AG04449 (cell line): ENCODE measurements at regions of chr11 and their contacts with region 1.

Region 1: GRCh38 chr11:25981998-25982397 is 349.9 kb upstream of the ANO3 start:
- DNase-seq: peak; percentile 12
- H3K4me3 ChIP-seq: no peak overlapping the region
- CTCF ChIP-seq: peak; percentile 45

Region 2: GRCh38 chr11:25958045-25958444 is 24.0 kb before region 1 on chr11:
- CTCF ChIA-PET with region 1: interaction called, 14 read pairs
- POLR2A ChIA-PET with region 1: no interaction called
- DNase-seq: no peak
- H3K4me3 ChIP-seq: no peak overlapping the region
- CTCF ChIP-seq: no peak

Region 3: DNA sequence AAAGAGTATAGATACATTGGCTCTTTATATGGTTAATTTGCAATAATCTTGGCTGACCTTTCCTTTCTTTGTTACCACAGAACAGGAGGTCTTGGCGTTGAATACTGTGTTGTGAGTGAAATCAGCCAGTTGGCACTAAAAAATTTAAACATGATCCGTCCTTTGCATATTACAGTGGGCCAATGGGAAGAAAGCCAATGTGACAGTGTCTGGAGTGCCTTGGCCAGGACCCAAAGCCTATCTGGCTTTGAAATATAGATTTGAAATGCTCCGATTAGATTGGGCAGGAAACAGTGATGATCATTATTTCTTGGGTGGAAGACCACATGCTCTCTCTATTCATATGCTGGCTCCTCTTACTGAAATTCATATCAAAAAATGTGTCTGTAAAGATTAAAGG is 10.3 kb after region 1 on chr11:
- CTCF ChIA-PET with region 1: interaction called, 44 read pairs
- POLR2A ChIA-PET with region 1: no interaction called
- DNase-seq: no peak
- H3K4me3 ChIP-seq: no peak overlapping the region
- CTCF ChIP-seq: no peak

Region 4: DNA sequence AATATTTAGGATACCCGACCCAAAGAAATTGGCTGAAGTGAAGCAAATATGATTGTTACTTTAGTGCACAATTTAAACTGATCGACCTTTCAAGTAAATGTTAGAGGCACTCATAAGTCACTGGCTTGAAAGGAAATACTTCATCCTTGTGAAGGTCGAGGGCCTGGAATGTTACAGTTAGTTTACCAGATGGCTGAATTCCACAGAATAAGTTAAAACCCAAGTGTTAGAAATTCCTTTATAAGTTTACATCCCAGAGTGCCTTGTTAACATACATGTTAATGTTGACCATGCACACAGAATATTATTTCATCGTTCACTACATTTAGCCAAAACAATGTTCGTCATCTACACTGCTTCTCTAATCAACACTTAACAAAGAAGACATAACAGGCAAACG is 114.5 kb after region 1 on chr11:
- CTCF ChIA-PET with region 1: no interaction called
- POLR2A ChIA-PET with region 1: no interaction called
- DNase-seq: no peak
- H3K4me3 ChIP-seq: no peak overlapping the region
- CTCF ChIP-seq: no peak

Region 5: GRCh38 chr11:26134481-26135355 is 152.7 kb after region 1 on chr11:
- CTCF ChIA-PET with region 1: interaction called, 28 read pairs
- POLR2A ChIA-PET with region 1: no interaction called
- DNase-seq: no peak
- H3K4me3 ChIP-seq: no peak overlapping the region
- CTCF ChIP-seq: peak; percentile 37

Region 6: GRCh38 chr11:26227296-26227695 is 245.3 kb after region 1 on chr11:
- CTCF ChIA-PET with region 1: interaction called, 141 read pairs
- POLR2A ChIA-PET with region 1: interaction called, 3 read pairs
- DNase-seq: peak; percentile 73
- H3K4me3 ChIP-seq: no peak overlapping the region; the same call in 1 of the 2 replicates
- CTCF ChIP-seq: peak; percentile 34

Region 7: GRCh38 chr11:26276798-26277424 is 294.9 kb after region 1 on chr11:
- CTCF ChIA-PET with region 1: interaction called, 52 read pairs
- POLR2A ChIA-PET with region 1: no interaction called
- DNase-seq: peak; percentile 10
- H3K4me3 ChIP-seq: no peak overlapping the region
- CTCF ChIP-seq: peak; percentile 86